Calu3 (cell line): ENCODE measurements at regions of chr4 and their contacts with region 1.

Region 1: GRCh38 chr4:124262211-124263179 is 450.0 kb downstream of the ANKRD50 start:
- DNase-seq: peak; percentile 65
- H3K4me3 Mint-ChIP-seq: no peak overlapping the region
- H3K27ac Mint-ChIP-seq: no peak overlapping the region
- H3K4me1 Mint-ChIP-seq: peaks cover 10% of the 10 kb centered on the region
- H3K27me3 Mint-ChIP-seq: no peaks in the 10 kb centered on the region
- CTCF ChIP-seq: peak; percentile 56

Region 2: GRCh38 chr4:123776254-123776653 is 486.2 kb before region 1 on chr4:
- CTCF ChIA-PET with region 1: interaction called, 3 read pairs
- intact Hi-C with region 1: loop called (anchors 1 kb)
- DNase-seq: no peak
- H3K4me3 Mint-ChIP-seq: no peak overlapping the region
- H3K27ac Mint-ChIP-seq: no peak overlapping the region
- H3K4me1 Mint-ChIP-seq: peaks cover 6% of the 10 kb centered on the region
- H3K27me3 Mint-ChIP-seq: no peaks in the 10 kb centered on the region
- CTCF ChIP-seq: no peak

Region 3: GRCh38 chr4:124202099-124202498 is 60.4 kb before region 1 on chr4:
- CTCF ChIA-PET with region 1: interaction called, 3 read pairs
- intact Hi-C with region 1: loop called (anchors 5 kb)
- DNase-seq: no peak
- H3K4me3 Mint-ChIP-seq: no peak overlapping the region
- H3K27ac Mint-ChIP-seq: no peak overlapping the region
- H3K4me1 Mint-ChIP-seq: peaks cover 30% of the 10 kb centered on the region
- H3K27me3 Mint-ChIP-seq: no peaks in the 10 kb centered on the region
- CTCF ChIP-seq: no peak